Caco-2 (cell line): ENCODE measurements at regions of chr14 and their contacts with region 1.

Region 1: GRCh38 chr14:100025111-100025510 is 40.1 kb upstream of the EVL start:
- DNase-seq: peak; percentile 79 to 82
- H3K4me3 ChIP-seq: no peak overlapping the region
- H3K4me3 Mint-ChIP-seq: no peak overlapping the region
- H3K27ac Mint-ChIP-seq: peak overlapping the region; percentile 12
- H3K4me1 ChIP-seq: peaks cover 21% of the 10 kb centered on the region
- H3K4me1 Mint-ChIP-seq: peaks cover 27% of the 10 kb centered on the region
- H3K27me3 ChIP-seq: no peaks in the 10 kb centered on the region
- H3K27me3 Mint-ChIP-seq: no peaks in the 10 kb centered on the region
- CTCF ChIP-seq: peak; percentile 67 to 77

Region 2: GRCh38 chr14:99982537-99983250 is 42.4 kb before region 1 on chr14:
- CTCF ChIA-PET with region 1: interaction called, 31 read pairs
- POLR2A ChIA-PET with region 1: no interaction called
- intact Hi-C with region 1: loop called (anchors 1 kb)
- DNase-seq: peak in 1 of 2 experiments; percentile 67
- H3K4me3 ChIP-seq: no peak overlapping the region
- H3K4me3 Mint-ChIP-seq: no peak overlapping the region
- H3K27ac Mint-ChIP-seq: no peak overlapping the region
- H3K4me1 ChIP-seq: no peaks in the 10 kb centered on the region
- H3K4me1 Mint-ChIP-seq: peaks cover 7% of the 10 kb centered on the region
- H3K27me3 ChIP-seq: no peaks in the 10 kb centered on the region
- H3K27me3 Mint-ChIP-seq: no peaks in the 10 kb centered on the region
- CTCF ChIP-seq: peak; percentile 82 to 89